GM12878 (cell line): ENCODE measurements at regions of chrX and their contacts with region 1.

Region 1: GRCh38 chrX:16842684-16843083 is 27.5 kb downstream of the RBBP7 start:
- DNase-seq: no peak
- ATAC-seq: no peak
- H3K4me3 ChIP-seq: no peak overlapping the region
- H3K27ac ChIP-seq: no peak overlapping the region
- H3K4me1 ChIP-seq: no peaks in the 10 kb centered on the region
- H3K27me3 ChIP-seq: no peaks in the 10 kb centered on the region
- CTCF ChIP-seq: no peak
- EP300 ChIP-seq: no peak
- POLR2A ChIP-seq: no peak
- RAD21 ChIP-seq: no peak

Region 2: GRCh38 chrX:16807548-16807947 is 35.1 kb before region 1 on chrX:
- CTCF ChIA-PET with region 1: no interaction called
- POLR2A ChIA-PET with region 1: no interaction called
- RAD21 ChIA-PET with region 1: no interaction called
- SMC1A ChIA-PET with region 1: no interaction called
- in situ Hi-C with region 1: no loop called
- intact Hi-C with region 1: no loop called
- DNase-seq: no peak
- ATAC-seq: peak; percentile 55
- H3K4me3 ChIP-seq: no peak overlapping the region
- H3K27ac ChIP-seq: no peak overlapping the region
- H3K4me1 ChIP-seq: no peaks in the 10 kb centered on the region
- H3K27me3 ChIP-seq: no peaks in the 10 kb centered on the region
- CTCF ChIP-seq: no peak
- EP300 ChIP-seq: no peak
- POLR2A ChIP-seq: no peak
- RAD21 ChIP-seq: no peak

Region 3: GRCh38 chrX:16826207-16826606 is 16.5 kb before region 1 on chrX:
- CTCF ChIA-PET with region 1: interaction called, 12 read pairs
- POLR2A ChIA-PET with region 1: no interaction called
- RAD21 ChIA-PET with region 1: interaction called, 5 read pairs
- SMC1A ChIA-PET with region 1: interaction called, 5 read pairs
- in situ Hi-C with region 1: no loop called
- intact Hi-C with region 1: no loop called
- DNase-seq: no peak
- ATAC-seq: peak; percentile 76
- H3K4me3 ChIP-seq: no peak overlapping the region
- H3K27ac ChIP-seq: no peak overlapping the region
- H3K4me1 ChIP-seq: no peaks in the 10 kb centered on the region
- H3K27me3 ChIP-seq: no peaks in the 10 kb centered on the region
- CTCF ChIP-seq: peak; percentile 37 to 68 (median 60); a peak in 5 of 6 replicates
- EP300 ChIP-seq: no peak
- POLR2A ChIP-seq: no peak
- RAD21 ChIP-seq: peak; percentile 65